CD14-positive monocyte (primary cell): ENCODE measurements at regions of chr1 and their contacts with region 1.

Region 1: DNA sequence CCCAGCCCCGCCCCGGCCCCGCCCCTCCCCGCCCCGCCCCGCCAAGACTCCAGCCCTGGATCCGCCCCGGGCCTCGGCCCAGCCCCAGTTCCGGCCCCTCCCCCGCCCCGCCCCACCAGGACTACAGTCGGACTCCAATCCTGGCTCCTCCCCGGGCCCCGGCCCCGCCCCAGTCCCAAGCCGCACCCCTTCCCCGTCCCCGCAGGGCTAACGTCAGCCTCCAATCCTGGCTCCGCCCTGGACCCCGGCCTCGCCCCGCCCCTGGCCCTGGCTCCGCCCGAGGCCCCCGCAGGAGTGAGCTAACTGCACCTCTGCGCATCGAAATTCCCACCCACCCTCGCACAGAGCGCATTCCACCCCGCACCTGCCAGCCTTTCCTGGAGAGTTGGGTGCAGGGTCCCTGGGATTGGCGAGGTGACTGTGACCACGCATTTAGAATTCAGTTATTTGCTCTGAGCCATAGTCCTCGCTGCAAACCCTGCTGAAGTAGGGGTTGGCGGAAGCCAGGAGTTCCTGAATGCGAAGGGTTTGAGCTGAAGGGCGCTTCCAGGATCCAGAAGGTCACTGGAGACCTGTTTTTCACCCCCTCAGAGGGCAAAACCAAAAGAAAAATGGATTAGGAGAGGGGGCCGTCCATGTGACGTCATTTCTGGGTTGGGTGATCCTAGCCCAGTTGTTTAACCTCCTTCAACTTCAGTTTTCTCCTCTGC is 588 bp upstream of the IGSF8 start:
- DNase-seq: peak; percentile 91 to 93 (median 93)
- H3K4me3 ChIP-seq: peak overlapping the region; percentile 48 to 82 (median 52)
- H3K4me3 Mint-ChIP-seq: peak overlapping the region; percentile 80 to 86
- H3K27ac ChIP-seq: peak overlapping the region; percentile 81 to 87
- H3K27ac Mint-ChIP-seq: peak overlapping the region; percentile 87 to 96 (median 92)
- H3K4me1 ChIP-seq: peaks cover 66 to 72% of the 10 kb centered on the region in 2 donors
- H3K4me1 Mint-ChIP-seq: peaks cover 58% of the 10 kb centered on the region
- H3K27me3 ChIP-seq: no peaks in the 10 kb centered on the region
- H3K27me3 Mint-ChIP-seq: peaks cover 3 to 10% (median 4%) of the 10 kb centered on the region in 3 donors
- CTCF ChIP-seq: no peak

Region 2: DNA sequence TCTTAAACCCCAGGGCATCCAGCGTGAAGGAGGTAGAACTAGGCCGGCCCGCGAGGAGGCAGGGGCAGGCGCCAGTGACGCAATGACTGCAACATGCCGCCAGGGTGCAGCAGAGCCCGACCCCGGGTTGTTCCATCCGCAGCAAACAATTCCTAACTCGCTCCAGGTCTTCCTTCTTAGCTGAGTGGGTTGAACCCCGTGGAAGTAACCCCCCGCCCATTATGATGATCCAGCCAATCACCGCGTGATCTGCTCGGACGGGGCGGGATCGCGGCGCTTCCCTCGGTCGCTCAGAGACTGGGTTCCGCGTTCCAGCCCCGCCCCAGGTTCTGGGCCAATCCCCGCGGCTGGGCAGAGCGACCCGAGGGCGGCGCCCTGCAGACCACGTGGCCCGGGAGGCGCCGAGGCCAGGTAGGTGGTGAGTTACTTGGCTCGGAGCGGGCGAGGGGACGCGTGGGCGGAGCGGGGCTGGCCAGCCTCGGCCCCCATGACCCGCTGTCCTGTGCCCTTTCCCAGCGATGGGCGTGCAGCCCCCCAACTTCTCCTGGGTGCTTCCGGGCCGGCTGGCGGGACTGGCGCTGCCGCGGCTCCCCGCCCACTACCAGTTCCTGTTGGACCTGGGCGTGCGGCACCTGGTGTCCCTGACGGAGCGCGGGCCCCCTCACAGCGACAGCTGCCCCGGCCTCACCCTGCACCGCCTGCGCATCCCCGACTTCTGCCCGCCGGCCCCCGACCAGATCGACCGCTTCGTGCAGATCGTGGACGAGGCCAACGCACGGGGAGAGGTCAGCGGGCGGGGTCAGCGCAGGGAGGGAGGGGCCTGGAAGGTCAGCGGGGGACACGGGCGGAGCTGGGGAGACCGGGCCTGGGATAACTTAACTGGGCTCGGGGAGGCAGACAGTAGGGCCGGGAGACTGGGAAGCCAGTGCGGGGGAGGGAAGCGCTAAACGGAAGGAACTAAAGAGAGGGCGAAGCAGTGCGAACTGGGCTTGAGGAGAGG is 318.1 kb before region 1 on chr1 and contains the start of gene DUSP23:
- intact Hi-C with region 1: loop called in 1 of 2 experiments (anchors 10 kb)
- DNase-seq: peak; percentile 97
- H3K4me3 ChIP-seq: peak within 1 kb of the TSS; percentile 64 to 91 (median 72)
- H3K4me3 Mint-ChIP-seq: peak within 1 kb of the TSS; percentile 81 to 90
- H3K27ac ChIP-seq: peak within 1 kb of the TSS in 1 of 2 donors; percentile 68
- H3K27ac Mint-ChIP-seq: peak within 1 kb of the TSS in 6 of 7 donors; percentile 34 to 86 (median 68)
- H3K4me1 ChIP-seq: peaks cover 13 to 17% of the 10 kb centered on the region in 2 donors
- H3K4me1 Mint-ChIP-seq: peaks cover 14% of the 10 kb centered on the region
- H3K27me3 ChIP-seq: no peaks in the 10 kb centered on the region
- H3K27me3 Mint-ChIP-seq: peaks cover 0 to 2% (median 1%) of the 10 kb centered on the region in 3 donors
- CTCF ChIP-seq: peak; percentile 92
- polyA plus RNA-seq, gene DUSP23: 37.3 to 136 (median 97.8) TPM

Region 3: DNA sequence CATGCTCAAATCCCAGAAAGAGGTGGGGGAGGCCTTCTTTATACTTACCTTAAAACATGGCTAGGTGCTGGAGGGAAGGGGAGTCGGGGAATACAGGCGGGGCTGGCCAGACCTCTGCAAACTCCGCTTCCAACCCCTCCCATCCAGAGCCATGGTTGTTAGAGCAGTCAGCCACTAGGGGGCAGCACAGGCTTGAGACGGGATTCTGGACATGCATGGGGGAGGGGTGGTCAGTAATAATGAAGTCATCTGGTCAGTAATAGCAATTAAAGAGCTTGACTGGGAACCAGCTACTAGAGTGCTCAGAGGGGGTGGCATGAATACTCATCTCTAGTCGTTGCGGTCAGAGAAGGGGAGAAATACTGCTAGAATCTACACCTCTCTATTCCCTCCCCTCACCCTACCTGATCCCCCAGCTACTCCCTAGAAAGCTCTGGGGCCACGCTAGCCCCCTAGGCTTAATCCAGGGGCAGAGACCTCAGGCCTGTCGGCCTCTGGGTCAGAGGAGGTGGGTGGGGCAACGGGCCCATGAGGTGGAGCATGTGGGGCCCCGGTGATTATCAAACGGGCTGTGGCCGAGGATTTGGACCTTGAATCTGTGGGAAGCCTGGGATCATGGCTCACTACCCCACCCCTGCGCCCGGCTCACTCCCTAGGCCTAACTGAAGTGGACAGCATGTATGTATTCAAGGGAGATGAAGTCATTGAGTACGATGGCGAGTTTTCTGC is 94.2 kb after region 1 on chr1:
- intact Hi-C with region 1: loop called in 1 of 2 experiments (anchors 10 kb)
- DNase-seq: peak; percentile 82 to 84 (median 82)
- H3K4me3 ChIP-seq: no peak overlapping the region
- H3K4me3 Mint-ChIP-seq: no peak overlapping the region
- H3K27ac ChIP-seq: no peak overlapping the region
- H3K27ac Mint-ChIP-seq: no peak overlapping the region
- H3K4me1 ChIP-seq: peaks cover 4 to 9% of the 10 kb centered on the region in 2 donors
- H3K4me1 Mint-ChIP-seq: no peaks in the 10 kb centered on the region
- H3K27me3 ChIP-seq: no peaks in the 10 kb centered on the region
- H3K27me3 Mint-ChIP-seq: peaks cover 2 to 3% (median 3%) of the 10 kb centered on the region in 3 donors
- CTCF ChIP-seq: peak; percentile 86

Region 4: GRCh38 chr1:160251687-160252526 is 152.9 kb after region 1 on chr1:
- intact Hi-C with region 1: loop called (anchors 5 to 10 kb)
- DNase-seq: peak; percentile 45 to 71 (median 63)
- H3K4me3 ChIP-seq: no peak overlapping the region
- H3K4me3 Mint-ChIP-seq: no peak overlapping the region
- H3K27ac ChIP-seq: peak overlapping the region in 1 of 2 donors; percentile 32
- H3K27ac Mint-ChIP-seq: peak overlapping the region in 3 of 7 donors; percentile 58 to 68 (median 60)
- H3K4me1 ChIP-seq: no peaks in the 10 kb centered on the region
- H3K4me1 Mint-ChIP-seq: peaks cover 2% of the 10 kb centered on the region
- H3K27me3 ChIP-seq: no peaks in the 10 kb centered on the region
- H3K27me3 Mint-ChIP-seq: peaks cover 0 to 3% (median 0%) of the 10 kb centered on the region in 3 donors
- CTCF ChIP-seq: peak; percentile 78

Region 5: DNA sequence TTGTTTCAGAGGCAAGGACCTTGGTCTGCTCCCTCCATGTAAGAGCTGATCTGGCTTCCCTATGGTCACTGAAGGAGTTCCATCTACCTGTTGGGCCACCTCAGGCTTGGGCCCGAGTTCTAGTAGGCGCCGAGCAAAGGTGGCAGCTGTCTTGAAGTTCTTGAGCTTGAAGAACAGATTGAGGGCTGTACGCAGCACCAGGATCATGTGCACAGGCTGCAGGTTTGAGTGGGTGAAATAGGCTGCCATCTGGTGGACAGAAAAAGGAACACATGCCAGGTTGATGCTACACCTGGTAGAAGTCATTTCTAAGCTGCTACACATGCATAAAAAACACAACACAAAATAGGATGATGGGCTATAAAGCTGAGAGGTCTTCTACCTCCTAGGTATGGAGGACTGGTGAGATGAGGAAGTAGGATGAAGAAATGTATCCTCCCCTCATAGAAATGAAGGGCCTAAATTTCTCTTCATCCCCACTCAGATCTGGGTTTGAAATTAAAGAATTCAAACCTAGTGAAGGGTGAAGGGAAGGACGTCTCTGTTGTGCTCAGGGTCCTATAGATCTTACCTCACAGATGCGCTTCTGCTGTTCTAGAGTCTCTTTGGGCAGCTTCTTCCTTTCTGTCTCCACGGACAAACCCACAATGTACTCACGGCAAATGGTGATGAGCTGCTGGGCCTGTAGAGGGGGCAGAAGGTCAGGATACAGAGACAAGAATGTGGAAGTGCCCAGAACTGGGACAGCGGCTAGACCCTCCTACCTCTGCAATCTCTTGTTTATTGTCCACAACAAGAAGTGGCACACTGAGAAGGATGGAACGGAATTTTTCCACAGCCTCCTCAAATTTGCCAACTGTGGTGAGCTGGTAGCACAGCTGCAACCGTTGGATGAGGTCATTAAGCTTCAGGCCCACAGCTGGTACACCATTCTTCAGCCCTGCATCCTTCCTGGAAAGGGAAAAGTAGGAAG is 192.5 kb after region 1 on chr1:
- intact Hi-C with region 1: loop called (anchors 5 to 10 kb)
- DNase-seq: peak; percentile 47 to 58 (median 57)
- H3K4me3 ChIP-seq: no peak overlapping the region
- H3K4me3 Mint-ChIP-seq: no peak overlapping the region
- H3K27ac ChIP-seq: peak overlapping the region in 1 of 2 donors; percentile 50
- H3K27ac Mint-ChIP-seq: peak overlapping the region; percentile 62 to 86 (median 69)
- H3K4me1 ChIP-seq: no peaks in the 10 kb centered on the region
- H3K4me1 Mint-ChIP-seq: peaks cover 3% of the 10 kb centered on the region
- H3K27me3 ChIP-seq: no peaks in the 10 kb centered on the region
- H3K27me3 Mint-ChIP-seq: no peaks in the 10 kb centered on the region
- CTCF ChIP-seq: peak; percentile 91